HepG2 (cell line): ENCODE measurements at regions of chr3 and their contacts with region 1.

Region 1: DNA sequence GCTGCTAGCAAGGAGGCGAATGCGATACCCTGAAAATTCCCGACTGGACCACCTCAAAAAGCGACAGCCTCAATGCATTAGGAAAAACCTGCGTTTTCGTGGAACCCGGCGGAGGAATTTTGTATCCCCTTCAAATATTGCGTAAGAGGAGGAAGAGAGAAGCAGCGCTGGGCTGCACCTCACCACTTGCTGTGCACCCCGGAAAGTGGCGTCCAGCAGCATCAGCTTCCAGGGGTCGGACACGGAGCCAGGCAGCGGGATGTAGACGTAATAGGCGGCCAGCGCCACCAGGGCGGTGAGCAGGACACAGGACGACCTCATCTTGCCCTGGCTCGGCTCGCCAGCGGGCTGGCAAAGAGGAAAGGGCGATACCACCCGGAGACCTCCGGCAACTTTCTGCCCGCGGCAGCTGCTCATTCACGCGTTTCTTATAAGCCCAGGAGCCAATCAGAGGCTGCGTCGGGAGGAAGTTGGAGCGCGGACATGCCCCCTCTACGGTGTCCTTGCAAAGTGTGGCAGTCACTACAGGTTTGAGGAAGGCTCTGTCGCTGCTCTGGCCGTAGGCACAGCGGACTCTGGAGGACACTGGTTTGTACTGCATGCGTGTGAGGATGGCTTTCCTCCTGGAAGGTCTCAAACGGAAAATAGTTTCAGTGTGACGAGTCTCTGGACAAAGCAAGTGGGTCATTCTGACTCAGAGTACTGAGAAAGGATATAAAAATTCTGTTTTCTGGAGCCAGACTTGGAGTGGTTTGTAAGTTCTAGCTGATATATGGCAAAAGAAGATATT is at the start of gene NCEH1:
- DNase-seq: peak; percentile 95
- ATAC-seq: peak; percentile 99
- H3K4me3 ChIP-seq: peak within 1 kb of the TSS; percentile 78 to 86 (median 78)
- H3K27ac ChIP-seq: peak within 1 kb of the TSS; percentile 62
- H3K4me1 ChIP-seq: peaks cover 46% of the 10 kb centered on the region
- H3K27me3 ChIP-seq: peaks cover 0 to 4% of the 10 kb centered on the region in 2 experiments; a peak in 1 of 5 replicates
- CTCF ChIP-seq: peak; percentile 96
- EP300 ChIP-seq: peak in 1 of 2 experiments; percentile 47; a peak in 1 of 4 replicates
- POLR2A ChIP-seq: peak; percentile 93 to 97
- RAD21 ChIP-seq: peak; percentile 91
- total RNA-seq, gene NCEH1: 7.9 and 12.9 TPM in 2 replicates

Region 2: DNA sequence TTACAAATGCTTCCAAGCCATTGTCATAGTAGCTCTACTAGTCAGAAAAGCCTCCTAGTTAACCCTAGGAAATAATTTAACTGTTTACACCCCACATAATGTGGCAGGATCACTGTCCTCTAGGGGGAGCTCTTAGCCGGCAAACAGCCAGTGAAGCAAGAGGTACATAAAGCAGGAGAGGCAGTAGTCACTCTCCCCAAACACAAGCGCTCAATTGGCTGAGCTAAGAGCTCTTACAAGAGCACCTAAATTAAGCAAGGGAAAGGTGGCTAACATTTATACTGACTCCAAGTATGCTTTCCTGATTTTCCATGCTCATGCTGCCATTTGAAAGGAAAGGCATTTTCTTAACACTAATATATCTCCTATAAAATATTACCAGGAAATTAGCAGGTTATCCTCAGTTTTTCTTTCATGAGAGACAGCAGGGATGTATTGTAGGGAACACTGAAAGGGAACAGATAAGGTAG is 37.6 kb before region 1 on chr3:
- CTCF ChIA-PET with region 1: interaction called, 11 read pairs
- POLR2A ChIA-PET with region 1: interaction called, 7 read pairs
- in situ Hi-C with region 1: no loop called
- intact Hi-C with region 1: loop called (anchors 1 kb)
- DNase-seq: peak; percentile 68
- ATAC-seq: peak; percentile 90
- H3K4me3 ChIP-seq: no peak overlapping the region
- H3K27ac ChIP-seq: no peak overlapping the region
- H3K4me1 ChIP-seq: peaks cover 5% of the 10 kb centered on the region; the same call in 1 of the 2 replicates
- H3K27me3 ChIP-seq: no peaks in the 10 kb centered on the region
- CTCF ChIP-seq: peak; percentile 83
- EP300 ChIP-seq: no peak
- POLR2A ChIP-seq: no peak
- RAD21 ChIP-seq: peak; percentile 80

Region 3: GRCh38 chr3:172698631-172699030 is 12.2 kb before region 1 on chr3:
- CTCF ChIA-PET with region 1: no interaction called
- POLR2A ChIA-PET with region 1: interaction called, 15 read pairs
- in situ Hi-C with region 1: no loop called
- intact Hi-C with region 1: loop called (anchors 2 kb)
- DNase-seq: no peak
- ATAC-seq: no peak
- H3K4me3 ChIP-seq: no peak overlapping the region
- H3K27ac ChIP-seq: peak overlapping the region; percentile 85
- H3K4me1 ChIP-seq: peaks cover 94% of the 10 kb centered on the region
- H3K27me3 ChIP-seq: no peaks in the 10 kb centered on the region
- CTCF ChIP-seq: no peak
- EP300 ChIP-seq: no peak
- POLR2A ChIP-seq: no peak
- RAD21 ChIP-seq: no peak

Region 4: DNA sequence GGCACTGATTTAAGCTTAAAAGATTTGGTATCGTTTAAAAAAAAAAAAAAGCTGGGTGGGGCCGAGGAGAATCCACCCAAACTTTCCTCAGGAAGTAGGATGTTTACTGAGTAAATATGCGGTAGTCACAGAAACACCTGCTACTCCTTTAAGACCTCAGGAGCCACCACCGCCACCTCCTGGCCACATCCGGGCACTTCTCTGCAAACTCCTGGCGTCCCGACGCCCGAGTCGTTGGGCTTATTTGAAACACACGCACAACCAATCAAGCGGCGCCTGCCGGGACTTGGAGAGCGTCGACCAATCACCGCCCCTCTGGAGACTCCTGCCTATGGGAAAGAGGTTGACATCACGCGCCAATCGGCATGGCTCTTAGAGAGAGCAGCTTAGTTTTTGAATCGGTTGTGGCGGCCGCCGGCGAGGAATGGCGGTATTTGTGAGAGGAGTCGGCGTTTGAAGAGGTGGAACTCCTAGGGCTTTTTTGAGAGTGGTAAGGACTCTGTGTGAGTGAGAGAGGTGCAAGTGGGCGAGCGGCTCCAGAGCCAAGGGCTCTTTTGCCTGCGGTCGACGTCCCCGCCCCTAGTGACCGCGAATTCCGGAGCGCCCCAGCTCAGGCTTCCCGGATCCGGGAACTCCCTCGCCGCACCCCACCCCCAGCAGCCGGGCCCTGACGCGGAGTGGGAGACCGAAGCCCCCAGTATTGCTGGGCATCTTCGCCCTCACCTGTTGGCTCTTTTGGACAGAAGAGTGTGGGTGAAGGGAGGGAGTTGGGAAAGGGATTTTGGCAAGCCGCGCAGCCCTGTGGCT is 39.7 kb after region 1 on chr3 and contains the start of gene ECT2:
- CTCF ChIA-PET with region 1: no interaction called
- POLR2A ChIA-PET with region 1: interaction called, 11 read pairs
- in situ Hi-C with region 1: no loop called
- intact Hi-C with region 1: loop called (anchors 2 kb)
- DNase-seq: peak; percentile 99
- ATAC-seq: peak; percentile 99
- H3K4me3 ChIP-seq: peak within 1 kb of the TSS; percentile 87 to 96 (median 94)
- H3K27ac ChIP-seq: peak within 1 kb of the TSS; percentile 83
- H3K4me1 ChIP-seq: peaks cover 70% of the 10 kb centered on the region
- H3K27me3 ChIP-seq: no peaks in the 10 kb centered on the region; a peak in 1 of 5 replicates
- CTCF ChIP-seq: peak; percentile 86
- EP300 ChIP-seq: peak; percentile 43 to 81; a peak in 3 of 4 replicates
- POLR2A ChIP-seq: peak; percentile 54 to 74
- RAD21 ChIP-seq: peak; percentile 22; the same call in 1 of the 2 replicates
- total RNA-seq, gene ECT2: 52.0 and 84.4 TPM in 2 replicates